Psoas muscle (tissue), 8 donors: ENCODE measurements at regions of chr4 and their contacts with region 1.

Region 1: GRCh38 chr4:42785817-42786216 is 106.7 kb upstream of the GRXCR1 start:
- DNase-seq: no peak
- ATAC-seq: no peak
- H3K4me3 ChIP-seq: no peak overlapping the region
- H3K27ac ChIP-seq: no peak overlapping the region
- H3K4me1 ChIP-seq: no peaks in the 10 kb centered on the region
- H3K27me3 ChIP-seq: no peaks in the 10 kb centered on the region
- CTCF ChIP-seq: no peak

Region 2: DNA sequence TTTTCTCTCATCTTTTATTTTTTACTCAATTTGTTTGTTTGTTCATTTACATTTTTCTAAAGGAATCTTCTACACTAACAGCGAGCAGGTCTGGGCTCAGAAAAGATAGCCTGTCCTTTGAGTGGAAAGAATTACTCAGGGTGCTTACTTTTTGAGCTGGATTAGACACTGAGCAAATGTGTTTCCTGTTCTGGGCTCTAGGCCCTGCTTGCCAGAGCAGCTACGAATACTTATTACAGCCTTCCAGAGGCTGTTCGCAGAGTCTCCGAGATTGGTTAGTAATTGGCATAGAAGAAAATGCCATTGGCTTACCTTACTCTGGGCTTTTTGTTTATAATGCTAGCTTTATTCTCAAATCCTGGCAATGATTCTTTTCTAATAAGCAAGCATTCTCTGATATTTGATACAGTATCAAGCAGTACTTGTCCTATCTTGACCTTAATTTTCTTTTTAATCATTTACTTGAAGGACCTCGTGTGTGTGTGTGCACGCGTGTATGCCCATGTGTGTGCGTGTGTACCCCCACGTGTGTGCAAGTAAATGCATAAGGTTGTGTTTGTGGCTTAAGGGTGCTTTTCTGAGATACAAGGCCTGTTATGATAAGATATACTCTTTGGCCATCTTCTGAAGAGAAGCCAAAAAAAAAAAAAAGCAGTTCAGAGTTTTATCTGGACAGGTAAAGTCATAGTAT is 30.5 kb after region 1 on chr4:
- intact Hi-C with region 1: loop called in 1 of 2 experiments (anchors 2 kb)
- DNase-seq: no peak
- ATAC-seq: no peak
- H3K4me3 ChIP-seq: no peak overlapping the region
- H3K27ac ChIP-seq: no peak overlapping the region
- H3K4me1 ChIP-seq: no peaks in the 10 kb centered on the region
- H3K27me3 ChIP-seq: no peaks in the 10 kb centered on the region
- CTCF ChIP-seq: no peak